Panc1 (cell line): ENCODE measurements at regions of chr2 and their contacts with region 1.

Region 1: GRCh38 chr2:27191053-27191829 is 20.6 kb upstream of the ATRAID start:
- DNase-seq: peak; percentile 43
- ATAC-seq: peak; percentile 95
- H3K4me3 ChIP-seq: no peak overlapping the region
- H3K27ac ChIP-seq: no peak overlapping the region
- H3K4me1 ChIP-seq: no peaks in the 10 kb centered on the region
- H3K27me3 ChIP-seq: no peaks in the 10 kb centered on the region
- CTCF ChIP-seq: peak; percentile 80

Region 2: DNA sequence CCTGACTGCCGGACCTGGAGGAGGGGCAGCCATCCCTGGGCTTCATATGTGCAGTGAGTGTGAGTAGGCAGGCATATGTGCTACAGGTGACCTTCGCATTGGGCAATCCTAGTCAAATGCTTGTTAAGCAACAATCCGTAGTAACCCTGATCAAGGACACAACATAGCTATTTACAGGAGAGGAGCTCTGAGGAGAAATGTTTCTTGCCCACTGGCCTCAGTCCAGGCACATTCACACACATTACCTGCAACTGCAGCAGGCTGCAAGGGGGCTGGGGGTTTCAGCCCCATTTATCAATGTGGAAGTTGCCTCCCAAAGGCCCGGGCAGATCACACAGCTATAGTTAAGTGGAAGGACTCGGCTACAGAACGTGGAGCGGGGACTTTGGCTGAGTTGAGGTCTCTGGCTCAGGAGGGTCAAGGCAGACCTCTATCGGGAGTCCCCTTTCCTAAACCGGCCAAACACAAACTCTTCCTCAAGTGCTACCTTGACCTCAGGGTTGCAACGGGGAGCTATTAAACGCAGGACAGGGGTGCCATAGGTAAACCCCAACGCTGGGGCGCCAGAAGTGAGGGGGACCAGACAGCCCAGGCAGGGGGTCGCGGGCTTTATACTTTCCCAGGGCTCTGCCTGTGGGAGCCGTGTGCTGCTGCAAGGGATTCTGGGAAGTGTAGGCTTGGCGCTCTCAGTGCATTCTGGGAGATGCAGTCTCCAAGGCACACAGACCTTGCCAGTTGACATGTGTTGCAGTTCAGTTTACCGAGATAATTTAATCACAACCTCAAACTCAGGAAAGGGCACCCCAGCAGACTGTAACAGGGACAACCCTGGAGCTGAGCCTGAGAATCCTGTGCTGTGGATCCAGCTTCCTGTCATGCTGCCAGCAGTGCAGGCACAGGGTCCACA is 95.2 kb before region 1 on chr2:
- CTCF ChIA-PET with region 1: interaction called, 4 read pairs
- POLR2A ChIA-PET with region 1: interaction called, 4 read pairs
- in situ Hi-C with region 1: no loop called
- intact Hi-C with region 1: loop called (anchors 1 kb)
- DNase-seq: no peak
- ATAC-seq: peak; percentile 76
- H3K4me3 ChIP-seq: peak overlapping the region in 1 of 2 experiments; percentile 36; a peak in 2 of 4 replicates
- H3K27ac ChIP-seq: no peak overlapping the region
- H3K4me1 ChIP-seq: no peaks in the 10 kb centered on the region
- H3K27me3 ChIP-seq: no peaks in the 10 kb centered on the region
- CTCF ChIP-seq: no peak